Motor neuron (in vitro differentiated cells): ENCODE measurements at regions of chr12 and their contacts with region 1.

Region 1: DNA sequence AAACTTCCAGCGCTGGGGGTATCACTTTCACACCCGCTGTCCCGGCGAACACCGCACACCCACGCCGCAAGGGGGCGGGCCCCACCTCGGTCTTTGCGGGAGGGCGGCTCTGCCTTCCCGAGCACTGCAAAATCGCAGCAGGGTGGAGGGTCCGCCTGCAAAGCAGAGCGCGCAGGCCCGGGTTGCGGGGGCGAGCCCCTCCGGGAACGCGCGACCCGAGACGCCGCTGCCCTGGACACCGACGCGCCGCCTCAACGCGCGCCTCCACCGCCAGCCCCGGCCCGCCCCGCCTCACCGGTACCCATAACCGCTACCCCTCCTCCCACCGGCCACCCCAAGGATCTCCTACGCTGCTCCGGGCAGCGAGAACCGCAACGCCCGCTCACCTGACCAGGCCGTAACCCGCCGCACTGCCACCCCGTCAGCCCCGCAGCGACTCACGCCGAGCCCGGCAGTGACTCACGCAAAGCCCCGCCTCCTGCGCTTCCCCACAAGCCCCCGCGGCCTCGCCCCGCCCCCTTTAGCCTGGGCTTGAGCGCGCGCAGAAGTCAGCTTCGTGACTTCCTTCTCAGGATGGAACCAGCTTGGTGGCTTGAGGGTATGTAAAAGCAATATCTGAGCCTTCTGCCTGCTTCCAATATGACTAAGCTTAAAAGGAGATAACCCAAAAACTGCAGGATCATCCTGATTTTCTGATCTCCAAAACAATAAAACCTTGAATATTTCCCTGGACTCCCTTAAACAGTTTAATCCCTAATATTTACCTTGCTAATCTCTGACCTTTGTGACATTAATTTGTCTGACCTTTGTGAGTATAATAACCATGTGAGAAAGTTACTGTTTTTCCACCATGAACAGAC is at the start of gene RPAP3:
- ATAC-seq: peak; percentile 83 to 96 (median 94)
- H3K4me3 ChIP-seq: peak within 1 kb of the TSS; percentile 66 to 99 (median 90)
- H3K27ac ChIP-seq: peak within 1 kb of the TSS; percentile 85 to 91
- H3K4me1 ChIP-seq: peaks cover 6 to 12% of the 10 kb centered on the region in 2 donors
- total RNA-seq, gene RPAP3: 17.1 to 45.6 (median 29.5) TPM

Region 2: GRCh38 chr12:47296828-47297227 is 409.0 kb before region 1 on chr12:
- in situ Hi-C with region 1: no loop called
- ATAC-seq: no peak
- H3K4me3 ChIP-seq: no peak overlapping the region
- H3K27ac ChIP-seq: no peak overlapping the region
- H3K4me1 ChIP-seq: no peaks in the 10 kb centered on the region

Region 3: GRCh38 chr12:47812797-47813510 is 107.2 kb after region 1 on chr12:
- in situ Hi-C with region 1: loop called in 1 of 9 experiments (anchors 25 kb)
- ATAC-seq: peak; percentile 55 to 91 (median 88)
- H3K4me3 ChIP-seq: peak overlapping the region in 4 of 5 donors; percentile 6 to 17 (median 14)
- H3K27ac ChIP-seq: peak overlapping the region; percentile 41 to 73
- H3K4me1 ChIP-seq: peaks cover 48 to 53% of the 10 kb centered on the region in 2 donors

Region 4: GRCh38 chr12:47837190-47838171 is 131.7 kb after region 1 on chr12:
- in situ Hi-C with region 1: loop called in 2 of 9 experiments (anchors 25 kb)
- ATAC-seq: peak in 7 of 8 experiments; percentile 19 to 66 (median 52)
- H3K4me3 ChIP-seq: no peak overlapping the region
- H3K27ac ChIP-seq: no peak overlapping the region
- H3K4me1 ChIP-seq: peaks cover 0 to 4% of the 10 kb centered on the region in 2 donors

Region 5: GRCh38 chr12:48183091-48183875 is 477.5 kb after region 1 on chr12 and contains the start of gene CCDC184:
- in situ Hi-C with region 1: loop called in 2 of 9 experiments (anchors 25 kb)
- ATAC-seq: peak; percentile 61 to 86 (median 83)
- H3K4me3 ChIP-seq: peak within 1 kb of the TSS; percentile 56 to 98 (median 86)
- H3K27ac ChIP-seq: peak within 1 kb of the TSS; percentile 60 to 90
- H3K4me1 ChIP-seq: peaks cover 13 to 14% of the 10 kb centered on the region in 2 donors
- total RNA-seq, gene CCDC184: 2.0 to 46.3 (median 29.3) TPM

Region 6: GRCh38 chr12:48618541-48618940 is 912.7 kb after region 1 on chr12:
- in situ Hi-C with region 1: loop called in 1 of 9 experiments (anchors 25 kb)
- ATAC-seq: peak; percentile 76 to 91 (median 86)
- H3K4me3 ChIP-seq: no peak overlapping the region
- H3K27ac ChIP-seq: no peak overlapping the region
- H3K4me1 ChIP-seq: no peaks in the 10 kb centered on the region